Psoas muscle (tissue), 8 donors: ENCODE measurements at regions of chr12 and their contacts with region 1.

Region 1: GRCh38 chr12:117874842-117875434 is 93.9 kb downstream of the KSR2 start:
- DNase-seq: peak; percentile 62 to 77
- ATAC-seq: peak; percentile 77 to 88 (median 80)
- H3K4me3 ChIP-seq: no peak overlapping the region
- H3K27ac ChIP-seq: no peak overlapping the region
- H3K4me1 ChIP-seq: no peaks in the 10 kb centered on the region
- H3K27me3 ChIP-seq: peaks cover 0 to 20% (median 2%) of the 10 kb centered on the region in 3 donors
- CTCF ChIP-seq: peak; percentile 88

Region 2: GRCh38 chr12:118016424-118017264 is 141.7 kb after region 1 on chr12 and contains the start of gene RFC5:
- intact Hi-C with region 1: loop called in 1 of 2 experiments (anchors 5 kb)
- DNase-seq: peak; percentile 99
- ATAC-seq: peak; percentile 99 to 100 (median 100)
- H3K4me3 ChIP-seq: peak within 1 kb of the TSS; percentile 87
- H3K27ac ChIP-seq: peak within 1 kb of the TSS; percentile 13
- H3K4me1 ChIP-seq: peaks cover 6% of the 10 kb centered on the region
- H3K27me3 ChIP-seq: no peaks in the 10 kb centered on the region
- CTCF ChIP-seq: no peak
- total RNA-seq, gene RFC5: 2.2 to 4.6 (median 3.2) TPM

Region 3: DNA sequence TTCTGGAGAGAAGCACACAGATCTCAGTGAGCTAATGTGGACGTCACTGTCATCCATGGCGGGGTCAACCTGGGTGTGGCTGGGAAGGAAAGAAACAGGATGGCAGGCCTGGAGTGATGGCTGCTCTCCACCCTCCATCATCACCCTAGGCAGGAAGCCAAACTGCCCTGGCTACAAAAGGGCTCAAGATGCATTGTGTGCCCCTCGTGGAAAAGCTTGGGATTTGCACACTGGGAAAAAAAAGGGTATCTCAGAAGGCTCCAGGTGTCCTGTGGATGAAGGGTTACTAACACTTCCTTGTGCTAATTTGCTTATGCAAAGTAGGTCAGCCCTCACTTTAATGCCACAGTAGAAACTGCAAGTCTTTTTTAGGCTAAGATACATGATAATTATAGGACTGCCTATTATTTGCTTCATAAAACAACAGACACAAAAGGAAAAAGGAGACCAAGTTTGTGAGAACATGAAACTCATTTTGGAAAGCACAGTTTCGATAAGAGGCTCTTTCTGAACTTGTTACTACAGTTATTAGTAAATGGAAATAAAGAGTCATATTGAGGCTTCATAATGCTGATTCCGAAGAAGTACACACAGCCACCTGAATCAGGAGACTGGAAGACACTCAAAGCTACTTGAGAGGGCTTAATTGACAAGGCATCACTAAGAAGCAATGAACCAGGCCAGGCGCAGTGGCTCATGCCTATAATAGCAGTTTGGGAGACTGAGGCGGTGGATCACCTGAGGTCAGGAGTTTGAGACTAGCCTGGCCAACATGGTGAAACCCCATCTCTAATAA is 160.5 kb after region 1 on chr12:
- intact Hi-C with region 1: loop called (anchors 5 to 10 kb)
- DNase-seq: no peak
- ATAC-seq: peak in 2 of 4 donors; percentile 17 to 32
- H3K4me3 ChIP-seq: no peak overlapping the region
- H3K27ac ChIP-seq: no peak overlapping the region
- H3K4me1 ChIP-seq: no peaks in the 10 kb centered on the region
- H3K27me3 ChIP-seq: no peaks in the 10 kb centered on the region
- CTCF ChIP-seq: no peak

Region 4: DNA sequence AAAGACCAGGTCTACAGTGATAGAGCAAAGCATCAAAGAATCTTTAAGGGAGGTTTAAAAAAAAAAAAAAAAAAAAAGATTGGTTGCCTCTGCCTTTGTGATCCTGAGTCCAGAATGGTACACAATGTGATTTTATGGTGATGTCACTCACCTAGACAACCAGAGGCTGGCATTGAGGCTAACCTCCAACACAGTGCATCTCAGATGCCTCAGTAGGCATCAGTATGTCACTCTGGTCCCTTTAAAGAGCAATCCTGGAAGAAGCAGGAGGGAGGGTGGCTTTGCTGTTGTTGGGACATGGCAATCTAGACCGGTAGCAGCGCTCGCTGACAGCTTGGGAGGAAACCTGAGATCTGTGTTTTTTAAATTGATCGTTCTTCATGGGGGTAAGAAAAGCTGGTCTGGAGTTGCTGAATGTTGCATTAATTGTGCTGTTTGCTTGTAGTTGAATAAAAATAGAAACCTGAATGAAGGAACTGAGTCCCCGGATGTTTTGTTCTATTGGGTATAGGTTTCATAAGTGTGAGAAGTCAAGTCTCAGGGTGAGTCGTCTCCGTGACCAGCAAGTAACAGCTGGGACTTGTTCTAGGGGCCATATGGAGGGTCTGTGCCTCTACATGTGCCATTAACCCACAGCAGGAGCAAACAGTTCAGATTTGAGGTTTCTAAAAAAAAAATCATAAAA is 270.3 kb after region 1 on chr12:
- intact Hi-C with region 1: loop called in 1 of 2 experiments (anchors 10 kb)
- DNase-seq: no peak
- ATAC-seq: peak in 3 of 4 donors; percentile 33 to 51 (median 34)
- H3K4me3 ChIP-seq: no peak overlapping the region
- H3K27ac ChIP-seq: no peak overlapping the region
- H3K4me1 ChIP-seq: no peaks in the 10 kb centered on the region
- H3K27me3 ChIP-seq: no peaks in the 10 kb centered on the region
- CTCF ChIP-seq: no peak

Region 5: GRCh38 chr12:118372541-118373495 is 497.9 kb after region 1 on chr12 and contains the start of gene TAOK3:
- intact Hi-C with region 1: loop called in 1 of 2 experiments (anchors 10 kb)
- DNase-seq: peak; percentile 98 to 99
- ATAC-seq: peak; percentile 86 to 94 (median 92)
- H3K4me3 ChIP-seq: peak within 1 kb of the TSS; percentile 99
- H3K27ac ChIP-seq: peak within 1 kb of the TSS; percentile 96
- H3K4me1 ChIP-seq: peaks cover 45% of the 10 kb centered on the region
- H3K27me3 ChIP-seq: no peaks in the 10 kb centered on the region
- CTCF ChIP-seq: no peak
- total RNA-seq, gene TAOK3: 13.5 to 18.4 (median 18.2) TPM